ENCODE measurements at regions of chr12 and their contacts with region 1.

Region 1: DNA sequence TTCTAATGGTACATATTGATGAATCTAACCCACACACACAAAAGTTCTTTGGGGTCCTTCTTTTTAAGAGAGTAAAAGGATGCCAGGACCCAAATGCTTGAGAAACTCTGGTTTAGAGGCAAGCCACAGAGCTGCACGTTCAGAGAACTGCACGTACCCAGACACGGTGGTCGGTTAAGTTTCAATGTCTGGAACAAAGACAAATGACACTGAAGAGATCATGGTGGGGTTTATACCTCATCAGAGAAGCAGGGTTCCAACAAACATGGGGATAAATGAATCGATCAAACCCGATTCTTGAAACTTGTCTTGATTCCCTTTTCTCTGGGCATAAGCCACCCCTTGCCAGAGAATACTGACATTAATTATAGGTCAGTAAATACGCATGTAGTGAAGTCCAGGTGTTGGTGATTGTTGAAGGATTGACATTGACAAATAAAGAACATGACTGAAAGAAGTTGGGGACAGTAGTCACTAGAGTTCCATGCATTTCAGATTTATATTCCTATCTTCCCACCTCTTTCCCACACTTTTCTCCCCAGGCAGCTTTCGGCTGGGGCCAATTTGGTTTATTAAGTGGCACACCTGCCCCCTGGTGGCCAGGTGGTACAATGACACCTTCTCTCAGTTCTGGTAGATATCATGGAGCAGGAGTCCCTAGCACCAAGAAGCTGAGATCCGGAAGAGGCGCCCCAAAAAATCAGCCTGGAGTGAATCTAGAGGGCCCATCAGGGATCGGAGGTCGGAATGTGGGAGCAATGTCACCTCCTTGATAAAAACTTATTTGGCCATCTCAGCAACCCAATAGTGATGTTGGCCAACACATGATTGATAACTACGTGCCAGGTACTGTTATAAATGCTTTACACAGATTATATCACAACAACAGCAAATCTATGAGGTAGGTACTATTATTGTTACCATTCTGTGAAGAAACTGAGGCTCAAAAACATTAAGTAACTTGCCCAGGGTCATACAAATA is 17.8 kb upstream of the HDAC7 start:
- DNase-seq: peak; percentile 59
- ATAC-seq: peak; percentile 84
- H3K4me3 ChIP-seq: no peak overlapping the region
- H3K27ac ChIP-seq: peak overlapping the region; percentile 52; the same call in 1 of the 2 replicates
- H3K4me1 ChIP-seq: no peaks in the 10 kb centered on the region
- H3K27me3 ChIP-seq: peaks cover 3% of the 10 kb centered on the region; the same call in 1 of the 2 replicates
- CTCF ChIP-seq: peak; percentile 90

Region 2: DNA sequence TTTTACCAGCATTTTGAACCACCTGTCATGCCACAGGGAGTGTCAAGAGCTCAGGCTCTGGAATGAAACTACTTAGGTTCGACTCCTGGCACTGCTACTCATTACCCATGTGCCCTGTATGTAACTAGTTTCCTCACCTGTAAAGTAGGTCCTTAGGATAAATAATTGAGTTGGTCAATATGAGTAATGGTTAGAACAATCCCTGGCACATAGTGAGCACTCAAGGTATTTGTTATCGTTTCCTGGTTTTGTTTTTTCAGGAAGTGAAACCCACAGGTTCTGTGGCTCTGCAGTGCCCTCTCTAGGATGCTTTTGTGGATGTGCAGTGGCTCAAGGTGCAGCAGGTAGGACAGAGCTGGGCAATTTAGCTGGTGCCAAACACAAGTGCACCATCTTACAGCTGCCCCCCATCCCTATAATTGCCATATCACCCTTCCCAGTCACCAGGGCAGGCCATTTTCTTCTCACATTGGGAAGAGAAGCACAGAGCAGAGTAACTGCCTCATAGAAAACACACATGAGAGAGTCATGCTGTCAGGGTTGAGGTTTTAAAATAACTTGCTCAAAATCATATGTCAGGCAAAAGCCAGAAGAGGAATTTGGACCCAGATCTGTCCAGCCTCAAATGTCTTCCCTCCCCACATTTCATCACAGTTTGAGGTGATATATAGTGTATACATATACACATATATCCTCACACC is 429.2 kb before region 1 on chr12:
- CTCF ChIA-PET with region 1: no interaction called
- POLR2A ChIA-PET with region 1: no interaction called
- in situ Hi-C with region 1: no loop called
- intact Hi-C with region 1: no loop called
- DNase-seq: no peak
- ATAC-seq: no peak
- H3K4me3 ChIP-seq: no peak overlapping the region
- H3K27ac ChIP-seq: no peak overlapping the region
- H3K4me1 ChIP-seq: no peaks in the 10 kb centered on the region
- H3K27me3 ChIP-seq: 0 out of 2 replicates have a peak, but pooled peaks cover 2% of the 10 kb centered on the region
- CTCF ChIP-seq: no peak; the same call in 1 of the 2 replicates

Region 3: GRCh38 chr12:47651368-47652254 is 185.9 kb before region 1 on chr12:
- CTCF ChIA-PET with region 1: no interaction called
- POLR2A ChIA-PET with region 1: no interaction called
- in situ Hi-C with region 1: no loop called
- intact Hi-C with region 1: loop called (anchors 5 kb)
- DNase-seq: peak; percentile 35
- ATAC-seq: peak; percentile 94
- H3K4me3 ChIP-seq: no peak overlapping the region
- H3K27ac ChIP-seq: no peak overlapping the region
- H3K4me1 ChIP-seq: no peaks in the 10 kb centered on the region
- H3K27me3 ChIP-seq: no peaks in the 10 kb centered on the region
- CTCF ChIP-seq: peak; percentile 81

Region 4: DNA sequence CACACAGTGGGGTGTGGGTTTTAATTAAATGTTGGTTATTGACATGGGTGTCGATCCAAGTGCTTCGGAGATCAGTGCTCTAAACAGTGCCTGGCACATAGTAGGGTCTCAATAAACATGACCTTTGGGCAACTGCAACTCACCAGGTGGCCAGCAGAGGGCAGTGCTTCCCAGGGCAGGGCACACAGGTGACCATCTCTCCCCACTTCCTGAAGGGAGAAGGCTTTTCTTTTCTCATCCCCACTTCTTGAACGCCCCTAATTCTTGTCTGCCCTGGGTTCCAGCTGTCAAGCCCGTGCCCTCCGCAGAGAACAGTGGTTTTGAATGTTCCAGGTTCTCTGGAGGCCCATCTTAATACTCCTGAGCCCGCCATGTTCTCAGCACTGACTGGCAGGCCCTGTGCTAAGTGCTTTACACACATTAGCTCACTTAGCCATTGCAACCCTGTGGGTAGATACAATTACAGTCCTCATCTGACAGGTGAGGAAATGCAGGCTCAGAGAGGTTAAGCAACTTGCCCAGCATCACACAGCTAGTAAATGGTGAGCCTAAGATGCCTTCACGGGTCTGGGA is 95.1 kb before region 1 on chr12:
- CTCF ChIA-PET with region 1: interaction called, 24 read pairs
- POLR2A ChIA-PET with region 1: no interaction called
- in situ Hi-C with region 1: no loop called
- intact Hi-C with region 1: loop called (anchors 2 kb)
- DNase-seq: peak; percentile 65
- ATAC-seq: peak; percentile 69
- H3K4me3 ChIP-seq: no peak overlapping the region
- H3K27ac ChIP-seq: no peak overlapping the region
- H3K4me1 ChIP-seq: no peaks in the 10 kb centered on the region; the same call in 1 of the 2 replicates
- H3K27me3 ChIP-seq: no peaks in the 10 kb centered on the region
- CTCF ChIP-seq: peak; percentile 99

Region 5: GRCh38 chr12:47797441-47797840 is 40.0 kb before region 1 on chr12:
- CTCF ChIA-PET with region 1: interaction called, 15 read pairs
- POLR2A ChIA-PET with region 1: no interaction called
- in situ Hi-C with region 1: no loop called
- intact Hi-C with region 1: loop called (anchors 1 kb)
- DNase-seq: no peak
- ATAC-seq: peak; percentile 77
- H3K4me3 ChIP-seq: no peak overlapping the region
- H3K27ac ChIP-seq: no peak overlapping the region
- H3K4me1 ChIP-seq: peaks cover 16% of the 10 kb centered on the region
- H3K27me3 ChIP-seq: no peaks in the 10 kb centered on the region
- CTCF ChIP-seq: no peak; the same call in 1 of the 2 replicates

Region 6: GRCh38 chr12:47819896-47820630 is 17.4 kb before region 1 on chr12 and contains the start of gene HDAC7:
- CTCF ChIA-PET with region 1: interaction called, 11 read pairs
- POLR2A ChIA-PET with region 1: interaction called, 4 read pairs
- in situ Hi-C with region 1: no loop called
- intact Hi-C with region 1: no loop called
- DNase-seq: no peak
- ATAC-seq: peak; percentile 71
- H3K4me3 ChIP-seq: peak within 1 kb of the TSS; percentile 63 to 81
- H3K27ac ChIP-seq: peak within 1 kb of the TSS; percentile 89
- H3K4me1 ChIP-seq: peaks cover 55% of the 10 kb centered on the region
- H3K27me3 ChIP-seq: no peaks in the 10 kb centered on the region
- CTCF ChIP-seq: no peak
- total RNA-seq, gene HDAC7: 84.2 TPM

Region 7: DNA sequence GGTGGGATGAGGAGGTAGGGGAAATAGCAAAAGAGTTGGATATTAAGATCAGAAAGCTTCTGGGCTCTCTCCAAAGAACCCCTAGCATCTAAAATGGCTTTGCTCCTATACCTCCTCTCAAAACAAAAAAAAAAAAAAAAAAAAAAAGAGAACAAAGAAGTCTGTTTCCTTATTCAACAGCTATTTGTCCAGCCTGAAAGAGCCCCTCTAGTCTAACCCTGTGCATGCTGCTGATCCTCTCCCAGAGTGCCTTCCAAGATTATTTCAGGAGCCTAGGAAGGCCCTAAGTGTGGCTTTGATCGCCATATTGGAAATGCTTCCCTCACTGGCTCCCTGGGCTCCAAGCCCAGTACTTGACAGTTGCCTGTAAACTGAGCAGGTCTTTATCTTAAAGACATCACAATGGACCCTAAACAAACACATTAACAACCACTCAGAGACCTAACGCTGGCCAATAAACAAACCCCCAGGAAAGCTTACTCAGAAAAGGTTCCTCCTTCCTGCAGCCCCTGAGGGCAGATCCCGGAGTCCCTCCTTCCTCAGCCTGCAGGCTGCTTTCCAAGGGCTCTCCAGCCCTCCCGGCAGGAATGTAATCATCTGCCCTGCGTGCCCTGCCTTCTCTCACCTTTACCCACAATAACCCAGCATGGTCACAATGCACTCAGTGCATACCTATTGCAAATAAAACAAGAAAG is 184.2 kb after region 1 on chr12:
- CTCF ChIA-PET with region 1: no interaction called
- POLR2A ChIA-PET with region 1: no interaction called
- in situ Hi-C with region 1: no loop called
- intact Hi-C with region 1: no loop called
- DNase-seq: no peak
- ATAC-seq: peak; percentile 94
- H3K4me3 ChIP-seq: no peak overlapping the region
- H3K27ac ChIP-seq: no peak overlapping the region
- H3K4me1 ChIP-seq: peaks cover 30% of the 10 kb centered on the region
- H3K27me3 ChIP-seq: peaks cover 6% of the 10 kb centered on the region; the same call in 1 of the 2 replicates
- CTCF ChIP-seq: no peak